Posterior cingulate gyrus (tissue), 11 donors: ENCODE measurements at regions of chr15 and their contacts with region 1.

Region 1: GRCh38 chr15:68559345-68560310 is 19.2 kb upstream of the CORO2B start:
- DNase-seq: peak; percentile 68 to 98 (median 85)

Region 2: GRCh38 chr15:68674975-68675374 is 115.3 kb after region 1 on chr15:
- intact Hi-C with region 1: loop called (anchors 1 kb)
- DNase-seq: peak in 3 of 10 donors; percentile 13 to 56 (median 18)

Region 3: GRCh38 chr15:69648212-69648611 is 1088.6 kb after region 1 on chr15:
- intact Hi-C with region 1: no loop called
- DNase-seq: peak in 3 of 10 donors; percentile 76 to 87 (median 80)